Lower leg skin (tissue), 4 donors: ENCODE measurements at regions of chr17 and their contacts with region 1.

Region 1: DNA sequence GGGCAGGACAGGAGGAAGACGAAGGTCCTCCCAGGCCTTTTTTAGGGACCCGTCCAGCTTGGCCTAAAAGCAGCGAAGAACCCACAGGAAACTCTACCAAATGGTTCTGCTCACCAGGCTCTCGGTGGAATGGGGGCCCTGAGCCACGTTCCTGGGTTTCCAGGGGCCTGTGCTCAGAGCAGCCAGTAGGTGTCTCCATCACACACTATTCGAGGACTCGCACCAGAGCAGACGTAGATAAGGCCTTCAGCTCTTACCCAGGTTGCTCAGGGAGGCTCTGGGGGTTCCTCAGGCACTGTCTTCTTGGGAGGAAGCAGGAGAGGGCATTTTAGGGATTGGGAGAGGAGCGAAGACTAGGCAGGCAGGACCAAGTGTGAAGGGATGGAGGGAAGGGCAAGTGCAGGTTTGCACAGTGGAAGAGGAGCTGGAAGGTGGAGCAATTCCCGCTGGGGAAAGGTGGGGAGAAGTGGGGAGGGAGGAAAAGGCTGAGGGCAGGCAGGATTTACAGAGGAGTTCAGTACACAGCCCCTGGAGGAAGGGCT is 157.1 kb downstream of the RGS9 start:
- DNase-seq: peak in 1 of 2 donors; percentile 86
- H3K4me3 ChIP-seq: no peak overlapping the region
- CTCF ChIP-seq: peak in 1 of 3 donors; percentile 64
- POLR2A ChIP-seq: no peak

Region 2: GRCh38 chr17:65345261-65346005 is 51.2 kb after region 1 on chr17:
- intact Hi-C with region 1: no loop called
- DNase-seq: no peak
- H3K4me3 ChIP-seq: no peak overlapping the region
- CTCF ChIP-seq: no peak
- POLR2A ChIP-seq: no peak

Region 3: DNA sequence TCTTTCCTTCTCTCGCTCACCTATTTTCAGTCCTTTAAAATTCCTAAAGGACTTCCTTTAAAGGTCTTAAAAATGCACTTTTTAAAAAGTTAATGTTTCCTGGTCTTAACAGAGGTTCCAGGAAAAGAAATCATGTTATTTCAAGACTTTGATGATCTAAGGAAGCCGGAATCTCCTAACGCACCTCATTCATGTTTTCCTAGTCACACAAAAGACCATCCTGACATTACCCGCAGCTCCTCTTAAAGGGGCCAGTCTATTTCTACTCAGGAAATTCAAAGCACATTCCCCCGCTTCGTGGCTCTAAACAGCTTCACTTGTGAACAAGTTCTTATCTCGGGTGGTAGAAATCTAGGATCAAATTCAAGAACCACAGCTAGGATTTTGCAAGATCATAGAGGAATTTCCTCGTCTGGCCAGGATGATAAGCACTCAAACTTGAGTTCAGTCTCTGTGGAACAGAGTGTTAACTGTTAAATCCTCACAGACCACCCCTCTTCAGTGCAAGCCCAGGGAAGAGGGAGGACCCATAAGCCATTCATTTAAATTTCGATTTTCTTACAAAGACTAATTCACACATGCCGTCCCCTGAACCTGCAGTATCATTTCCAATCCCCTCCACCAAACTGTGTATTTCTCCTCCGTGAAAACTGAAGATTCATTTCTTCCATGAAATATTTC is 404.3 kb after region 1 on chr17:
- intact Hi-C with region 1: no loop called
- DNase-seq: no peak
- H3K4me3 ChIP-seq: no peak overlapping the region
- CTCF ChIP-seq: no peak
- POLR2A ChIP-seq: no peak

Region 4: GRCh38 chr17:65988081-65988850 is 694.0 kb after region 1 on chr17:
- intact Hi-C with region 1: loop called (anchors 5 kb)
- DNase-seq: no peak
- H3K4me3 ChIP-seq: no peak overlapping the region
- CTCF ChIP-seq: peak in 1 of 3 donors; percentile 34
- POLR2A ChIP-seq: no peak

Region 5: GRCh38 chr17:66165513-66166123 is 871.4 kb after region 1 on chr17:
- intact Hi-C with region 1: loop called (anchors 5 kb)
- DNase-seq: no peak
- H3K4me3 ChIP-seq: no peak overlapping the region
- CTCF ChIP-seq: no peak
- POLR2A ChIP-seq: no peak